ENCODE measurements at regions of chr1 and their contacts with region 1.

Region 1: DNA sequence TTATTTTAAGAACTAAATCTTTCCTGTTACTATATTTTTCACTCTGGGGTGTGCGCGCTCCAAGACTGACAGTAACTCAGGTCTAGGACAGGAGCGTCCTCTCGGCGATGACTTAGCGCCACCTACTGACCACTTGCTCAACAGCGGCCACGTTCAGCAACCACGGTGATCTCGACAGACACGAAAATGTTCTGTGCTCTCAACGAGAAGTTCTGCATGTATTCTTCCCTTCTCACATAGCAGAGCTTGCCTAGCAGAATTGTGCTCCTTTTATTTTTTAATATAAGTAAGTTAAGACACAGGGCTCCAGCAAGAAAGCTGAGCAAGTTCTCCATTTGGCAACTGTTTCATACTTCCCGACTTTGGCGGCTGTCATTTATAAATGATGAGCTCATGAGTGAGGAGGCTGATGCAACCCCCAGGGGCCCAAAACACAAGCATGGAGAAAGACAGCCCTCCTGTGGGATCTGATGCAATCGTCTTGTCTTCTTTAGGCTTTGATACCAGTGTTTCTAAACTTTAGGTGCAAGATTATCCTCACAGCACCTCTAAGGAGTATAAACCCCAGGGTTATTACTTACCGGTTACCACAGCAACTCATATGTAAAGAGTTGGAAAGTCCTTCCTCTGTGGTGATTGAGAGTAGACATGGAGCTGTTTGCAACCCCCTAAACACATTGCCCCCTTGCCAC is 92.6 kb downstream of the HHIPL2 start:
- DNase-seq: peak; percentile 92
- H3K4me3 Mint-ChIP-seq: no peak overlapping the region
- H3K27ac Mint-ChIP-seq: no peak overlapping the region
- H3K4me1 Mint-ChIP-seq: peaks cover 18% of the 10 kb centered on the region
- H3K27me3 Mint-ChIP-seq: no peaks in the 10 kb centered on the region

Region 2: GRCh38 chr1:220879076-220879508 is 1576.2 kb before region 1 on chr1 and contains the start of gene HLX:
- CTCF ChIA-PET with region 1: no interaction called
- intact Hi-C with region 1: loop called (anchors 5 kb)
- DNase-seq: peak; percentile 31
- H3K4me3 Mint-ChIP-seq: peak within 1 kb of the TSS; percentile 63
- H3K27ac Mint-ChIP-seq: no peak within 1 kb of the TSS
- H3K4me1 Mint-ChIP-seq: peaks cover 37% of the 10 kb centered on the region
- H3K27me3 Mint-ChIP-seq: peaks cover 73% of the 10 kb centered on the region
- total RNA-seq, gene HLX: 0.12 TPM in 1 of 2 experiments, not detected in the other

Region 3: GRCh38 chr1:221839796-221840395 is 615.4 kb before region 1 on chr1:
- CTCF ChIA-PET with region 1: no interaction called
- intact Hi-C with region 1: loop called (anchors 10 kb)
- DNase-seq: peak; percentile 87
- H3K4me3 Mint-ChIP-seq: no peak overlapping the region
- H3K27ac Mint-ChIP-seq: peak overlapping the region; percentile 9
- H3K4me1 Mint-ChIP-seq: peaks cover 35% of the 10 kb centered on the region
- H3K27me3 Mint-ChIP-seq: peaks cover 5% of the 10 kb centered on the region

Region 4: DNA sequence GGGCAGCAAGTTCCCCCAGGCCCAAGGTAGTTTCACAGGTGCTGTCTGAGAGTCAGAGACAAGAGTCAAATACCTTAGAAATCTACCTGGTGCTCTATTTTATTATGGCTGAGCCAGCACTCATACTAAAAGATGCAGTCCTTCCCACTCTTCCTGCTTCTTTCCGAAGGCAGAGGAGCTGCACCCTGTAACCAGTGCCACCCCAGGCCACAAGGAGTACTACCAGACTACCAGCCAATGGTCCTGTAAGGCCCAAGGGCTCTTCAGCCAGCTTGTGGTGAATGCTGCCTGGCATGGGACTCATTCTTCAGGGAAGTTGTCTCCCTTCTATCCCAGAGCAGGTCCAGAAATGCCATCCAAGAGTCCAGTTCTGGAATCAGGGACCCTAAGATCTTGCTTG is 509.7 kb before region 1 on chr1:
- CTCF ChIA-PET with region 1: no interaction called
- intact Hi-C with region 1: no loop called
- DNase-seq: no peak
- H3K4me3 Mint-ChIP-seq: no peak overlapping the region
- H3K27ac Mint-ChIP-seq: no peak overlapping the region
- H3K4me1 Mint-ChIP-seq: no peaks in the 10 kb centered on the region
- H3K27me3 Mint-ChIP-seq: no peaks in the 10 kb centered on the region

Region 5: GRCh38 chr1:222095606-222096475 is 359.5 kb before region 1 on chr1:
- CTCF ChIA-PET with region 1: interaction called, 80 read pairs
- intact Hi-C with region 1: loop called (anchors 1 kb)
- DNase-seq: peak; percentile 77
- H3K4me3 Mint-ChIP-seq: no peak overlapping the region
- H3K27ac Mint-ChIP-seq: no peak overlapping the region
- H3K4me1 Mint-ChIP-seq: no peaks in the 10 kb centered on the region
- H3K27me3 Mint-ChIP-seq: no peaks in the 10 kb centered on the region

Region 6: GRCh38 chr1:222195857-222196256 is 259.5 kb before region 1 on chr1:
- CTCF ChIA-PET with region 1: interaction called, 3 read pairs
- intact Hi-C with region 1: loop called (anchors 10 kb)
- DNase-seq: no peak
- H3K4me3 Mint-ChIP-seq: no peak overlapping the region
- H3K27ac Mint-ChIP-seq: no peak overlapping the region
- H3K4me1 Mint-ChIP-seq: no peaks in the 10 kb centered on the region
- H3K27me3 Mint-ChIP-seq: no peaks in the 10 kb centered on the region

Region 7: GRCh38 chr1:222424826-222425225 is 30.5 kb before region 1 on chr1:
- CTCF ChIA-PET with region 1: interaction called, 10 read pairs
- intact Hi-C with region 1: no loop called
- DNase-seq: no peak
- H3K4me3 Mint-ChIP-seq: no peak overlapping the region
- H3K27ac Mint-ChIP-seq: no peak overlapping the region
- H3K4me1 Mint-ChIP-seq: peaks cover 36% of the 10 kb centered on the region
- H3K27me3 Mint-ChIP-seq: no peaks in the 10 kb centered on the region

Region 8: DNA sequence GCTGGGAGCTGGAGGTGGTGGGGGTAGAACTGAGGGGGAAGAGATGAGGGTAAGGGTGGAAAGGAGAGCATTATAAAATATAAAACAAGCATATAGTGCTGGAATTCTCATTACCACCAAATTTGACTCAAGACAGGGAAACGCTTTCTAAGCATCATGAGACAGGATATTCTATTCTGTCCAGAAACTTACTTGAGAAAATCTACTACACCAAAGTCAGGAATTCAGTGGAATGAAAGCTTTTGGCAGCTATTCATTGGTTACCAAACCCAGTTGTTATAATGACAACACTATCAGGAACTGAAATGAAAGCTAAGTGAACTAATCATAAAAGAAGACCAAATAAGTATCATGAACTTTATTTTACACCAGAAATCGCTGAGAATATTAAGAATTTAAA is 242.5 kb after region 1 on chr1:
- CTCF ChIA-PET with region 1: no interaction called
- intact Hi-C with region 1: no loop called
- DNase-seq: no peak
- H3K4me3 Mint-ChIP-seq: no peak overlapping the region
- H3K27ac Mint-ChIP-seq: no peak overlapping the region
- H3K4me1 Mint-ChIP-seq: peaks cover 14% of the 10 kb centered on the region
- H3K27me3 Mint-ChIP-seq: no peaks in the 10 kb centered on the region

Region 9: DNA sequence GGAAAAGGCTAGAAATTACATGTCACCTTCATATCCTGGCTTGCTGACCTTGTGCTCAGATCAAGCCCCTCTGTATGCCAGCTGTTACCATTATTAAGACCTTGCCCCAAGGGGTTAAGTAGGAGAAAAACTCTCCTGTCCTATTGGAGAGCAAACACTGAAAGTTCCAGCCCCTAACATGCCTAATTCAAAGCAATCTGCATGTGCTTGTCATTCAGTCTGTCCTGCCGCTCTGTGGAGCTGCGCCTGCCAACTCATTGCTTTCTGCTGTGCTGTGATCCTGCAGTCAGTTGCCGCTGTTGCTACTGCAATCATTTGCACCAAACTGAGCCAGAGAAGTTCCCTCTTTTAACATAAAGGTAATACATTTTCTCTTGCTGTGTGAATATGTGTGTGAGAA is 472.9 kb after region 1 on chr1:
- CTCF ChIA-PET with region 1: no interaction called
- intact Hi-C with region 1: no loop called
- DNase-seq: no peak
- H3K4me3 Mint-ChIP-seq: no peak overlapping the region
- H3K27ac Mint-ChIP-seq: no peak overlapping the region
- H3K4me1 Mint-ChIP-seq: no peaks in the 10 kb centered on the region
- H3K27me3 Mint-ChIP-seq: no peaks in the 10 kb centered on the region